ENCODE measurements at regions of chr6 and their contacts with region 1.

Region 1: GRCh38 chr6:137866914-137867684 is at the start of gene TNFAIP3:
- DNase-seq: peak; percentile 95
- ATAC-seq: peak; percentile 91
- total RNA-seq, gene TNFAIP3: 6.8 TPM

Region 2: GRCh38 chr6:137799950-137800568 is 67.0 kb before region 1 on chr6:
- intact Hi-C with region 1: loop called (anchors 5 kb)
- DNase-seq: no peak
- ATAC-seq: peak; percentile 48

Region 3: DNA sequence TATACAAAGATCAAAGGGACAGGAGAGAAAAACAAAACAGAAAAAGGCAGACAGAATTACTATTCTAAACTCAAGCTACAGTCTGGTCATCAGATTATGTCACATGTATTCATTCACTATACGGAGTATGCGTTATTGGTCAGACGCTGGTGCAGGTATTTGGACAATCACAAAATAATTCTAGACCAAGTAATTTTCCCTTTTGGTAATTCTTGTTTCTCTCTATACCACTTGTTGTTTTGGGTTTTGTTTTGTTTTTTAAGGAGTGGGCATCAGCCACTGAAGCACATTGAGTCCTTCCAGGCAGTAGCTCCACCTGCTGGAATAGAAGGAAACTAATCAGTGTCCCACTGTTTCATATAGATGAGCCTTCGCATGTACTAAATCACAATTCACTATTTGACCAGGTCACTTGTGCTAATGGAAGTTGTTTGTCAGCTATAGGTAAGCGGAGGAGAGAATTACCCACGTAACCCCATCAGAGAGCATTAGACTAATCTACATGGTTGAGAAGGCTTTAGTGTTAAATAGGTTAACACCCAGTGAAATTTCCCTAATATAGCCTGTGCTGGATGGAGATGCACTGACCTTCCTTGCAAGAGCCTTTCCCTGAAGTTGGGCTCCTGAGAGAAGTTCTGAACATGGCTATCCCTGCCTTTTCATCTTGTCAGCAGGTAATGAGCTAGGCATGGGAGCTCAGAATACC is 77.8 kb after region 1 on chr6:
- intact Hi-C with region 1: loop called (anchors 2 kb)
- DNase-seq: no peak
- ATAC-seq: peak; percentile 77